PC-9 (cell line): ENCODE measurements at regions of chr1 and their contacts with region 1.

Region 1: DNA sequence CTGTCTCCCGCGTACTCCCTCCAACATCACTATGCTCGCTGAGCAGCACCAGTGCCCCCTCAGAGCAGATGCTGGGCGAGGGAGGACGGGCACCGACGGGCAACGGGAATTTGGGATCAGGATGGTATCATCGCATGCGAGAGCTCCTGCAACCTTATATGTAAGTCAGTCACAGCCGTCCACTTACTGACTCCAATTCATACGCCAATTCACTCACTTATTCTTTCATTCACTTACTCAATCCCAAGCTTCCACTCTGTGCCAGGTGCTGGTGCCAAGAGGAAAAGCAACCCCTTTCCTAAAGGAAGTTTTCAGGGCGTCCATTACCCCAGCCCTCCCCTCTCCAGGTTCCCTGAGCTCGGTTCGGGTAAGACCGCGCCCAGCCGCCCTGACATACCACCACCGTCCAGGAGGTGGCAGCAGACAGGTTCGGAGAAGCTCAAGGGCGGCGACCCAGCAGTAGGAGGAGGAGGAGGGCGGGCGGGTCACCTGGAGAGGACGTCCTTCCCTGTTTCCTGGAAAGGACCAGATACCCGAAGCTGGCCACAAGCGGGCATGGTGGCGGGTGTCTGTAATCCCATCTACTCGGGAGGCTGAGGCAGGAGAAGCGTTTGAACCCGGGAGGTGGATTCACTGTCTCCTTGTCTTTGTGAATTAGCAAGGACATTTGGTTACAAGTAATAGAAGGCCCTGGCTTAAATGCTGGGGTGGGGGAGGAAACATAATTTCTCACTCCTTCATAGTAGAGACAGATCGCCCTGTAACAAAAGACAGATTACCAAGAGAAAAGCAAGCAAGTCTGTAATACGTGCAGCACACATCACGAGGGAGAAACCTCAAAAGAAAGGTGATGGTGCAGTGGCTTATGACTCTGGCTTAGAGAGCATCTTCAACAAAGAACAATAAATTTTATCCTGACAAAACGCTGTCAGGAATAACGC is 7.6 kb upstream of the IL22RA1 start:
- DNase-seq: peak; percentile 67 to 92
- H3K4me3 ChIP-seq: peak overlapping the region; percentile 39; the same call in 1 of the 2 replicates
- H3K27ac ChIP-seq: no peak overlapping the region
- H3K4me1 ChIP-seq: peaks cover 10% of the 10 kb centered on the region
- H3K27me3 ChIP-seq: no peaks in the 10 kb centered on the region
- CTCF ChIP-seq: peak; percentile 78

Region 2: GRCh38 chr1:23384302-23385058 is 766.0 kb before region 1 on chr1:
- CTCF ChIA-PET with region 1: no interaction called
- POLR2A ChIA-PET with region 1: interaction called, 17 read pairs
- intact Hi-C with region 1: no loop called
- DNase-seq: peak in 1 of 2 experiments; percentile 84
- H3K4me3 ChIP-seq: no peak overlapping the region
- H3K27ac ChIP-seq: no peak overlapping the region
- H3K4me1 ChIP-seq: peaks cover 6% of the 10 kb centered on the region; the same call in 1 of the 2 replicates
- H3K27me3 ChIP-seq: no peaks in the 10 kb centered on the region
- CTCF ChIP-seq: no peak

Region 3: GRCh38 chr1:24070821-24071393 is 79.6 kb before region 1 on chr1:
- CTCF ChIA-PET with region 1: interaction called, 5 read pairs
- POLR2A ChIA-PET with region 1: no interaction called
- intact Hi-C with region 1: loop called (anchors 1 kb)
- DNase-seq: peak; percentile 57 to 76
- H3K4me3 ChIP-seq: no peak overlapping the region
- H3K27ac ChIP-seq: no peak overlapping the region
- H3K4me1 ChIP-seq: no peaks in the 10 kb centered on the region
- H3K27me3 ChIP-seq: no peaks in the 10 kb centered on the region
- CTCF ChIP-seq: peak; percentile 88

Region 4: DNA sequence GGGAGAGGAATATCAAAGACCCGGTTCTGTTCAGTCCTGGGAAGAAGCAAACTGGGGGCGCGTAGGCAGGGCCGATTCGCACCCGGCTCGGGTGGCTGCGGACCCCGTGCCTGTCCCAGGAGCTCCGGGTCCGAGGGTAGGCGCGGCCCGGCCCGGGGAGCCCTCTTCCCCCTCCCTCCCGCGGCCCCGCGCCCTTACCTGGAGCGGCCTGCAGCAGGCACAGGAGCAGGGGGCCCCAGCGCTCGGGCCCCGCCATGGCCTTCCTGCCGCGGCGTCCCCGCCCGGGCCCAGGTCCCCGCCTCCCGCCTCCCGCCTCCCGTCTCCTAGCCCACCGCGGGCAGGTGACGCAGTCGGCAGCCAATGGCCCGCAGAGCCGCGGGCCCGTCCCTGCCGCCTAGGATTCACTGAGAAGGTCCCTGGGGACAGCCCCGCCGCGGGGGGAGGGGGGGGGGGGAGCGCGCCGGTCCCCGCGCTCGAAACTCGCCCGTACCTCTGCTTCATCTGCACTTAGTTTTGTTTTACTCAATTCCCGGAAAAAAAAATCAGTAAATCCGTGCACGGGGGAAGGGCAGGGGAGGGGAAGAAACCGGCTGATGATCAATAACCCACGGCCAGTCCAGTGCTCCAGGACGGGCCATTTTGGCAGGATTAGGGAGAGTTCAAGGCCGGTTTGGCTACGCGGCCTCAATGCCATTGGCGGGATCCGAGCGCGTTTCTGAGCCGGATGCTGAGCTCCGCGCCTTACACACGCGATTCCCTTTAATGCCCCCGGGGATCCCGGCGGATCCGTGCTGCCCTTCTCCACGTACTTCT is 36.7 kb after region 1 on chr1 and contains the start of gene IFNLR1:
- CTCF ChIA-PET with region 1: interaction called, 7 read pairs
- POLR2A ChIA-PET with region 1: interaction called, 3 read pairs
- intact Hi-C with region 1: loop called (anchors 2 kb)
- DNase-seq: peak; percentile 55 to 76
- H3K4me3 ChIP-seq: peak within 1 kb of the TSS; percentile 73
- H3K27ac ChIP-seq: peak within 1 kb of the TSS; percentile 37
- H3K4me1 ChIP-seq: peaks cover 21% of the 10 kb centered on the region
- H3K27me3 ChIP-seq: no peaks in the 10 kb centered on the region
- CTCF ChIP-seq: no peak
- total RNA-seq, gene IFNLR1: 5.5 and 8.1 TPM in 2 replicates

Region 5: DNA sequence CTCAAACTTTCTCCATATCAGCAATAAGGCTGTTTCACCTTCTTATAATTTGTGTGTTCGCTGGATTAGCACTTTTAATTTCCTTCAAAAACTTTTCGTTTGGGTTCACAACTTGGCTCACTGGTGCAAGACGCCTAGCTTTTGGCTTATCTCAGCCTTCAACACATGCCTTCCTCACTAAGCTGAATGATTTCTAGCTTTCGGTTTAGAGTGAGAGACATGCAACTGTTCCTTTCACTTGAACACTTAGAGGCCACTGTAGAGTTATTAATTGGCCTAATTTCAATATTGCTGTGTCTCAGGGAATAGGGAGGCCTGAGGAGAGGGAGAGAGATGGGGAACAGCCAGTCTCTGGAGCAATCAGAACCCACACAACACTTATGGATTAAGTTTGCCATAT is 77.8 kb after region 1 on chr1:
- CTCF ChIA-PET with region 1: no interaction called
- POLR2A ChIA-PET with region 1: no interaction called
- intact Hi-C with region 1: no loop called
- DNase-seq: no peak
- H3K4me3 ChIP-seq: no peak overlapping the region
- H3K27ac ChIP-seq: no peak overlapping the region
- H3K4me1 ChIP-seq: no peaks in the 10 kb centered on the region
- H3K27me3 ChIP-seq: no peaks in the 10 kb centered on the region
- CTCF ChIP-seq: no peak